Naive thymus-derived CD4-positive, alpha-beta T cell (primary cell): ENCODE measurements at regions of chr16 and their contacts with region 1.

Region 1: DNA sequence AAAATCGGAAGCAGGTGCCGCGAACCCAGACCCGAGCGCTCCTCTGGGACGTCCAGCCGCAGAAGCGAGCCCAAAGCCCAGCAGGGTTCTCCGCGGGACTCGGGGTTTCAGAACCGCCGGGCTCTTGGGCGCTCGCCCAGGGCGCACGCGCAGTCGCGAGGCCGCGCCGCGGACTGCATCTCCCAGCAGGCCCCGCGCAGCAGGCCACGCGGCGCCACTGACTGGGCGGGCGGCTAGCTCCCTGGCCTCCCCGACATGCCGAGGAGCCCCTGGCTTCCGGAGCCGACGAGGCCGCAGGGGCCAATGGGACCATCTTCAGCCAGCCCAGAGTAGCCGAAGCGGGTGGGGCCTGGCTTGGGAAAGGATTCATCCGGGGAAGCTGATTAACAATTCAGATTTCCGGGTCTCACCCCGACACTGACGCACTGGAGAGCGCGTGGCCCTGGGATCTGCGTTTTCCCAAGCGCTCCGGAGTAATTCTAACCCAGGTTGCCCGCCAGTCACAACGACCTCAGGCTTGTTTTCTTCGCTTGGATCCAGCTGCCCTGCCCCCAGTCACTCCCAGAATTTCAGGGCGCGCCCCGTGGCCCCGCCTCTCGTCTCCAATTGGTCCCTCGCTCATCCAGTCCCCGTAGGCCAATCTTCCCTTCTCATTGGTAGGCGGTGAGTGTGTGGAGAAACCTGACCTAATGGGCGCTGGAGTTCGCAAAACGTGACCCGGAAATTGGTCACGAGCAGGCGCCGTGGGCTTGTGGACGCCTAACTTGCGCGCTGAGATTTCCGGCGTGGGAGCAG is at the start of gene ZNF263:
- DNase-seq: peak; percentile 91 to 97 (median 95)
- ATAC-seq: peak; percentile 94
- H3K4me3 ChIP-seq: peak within 1 kb of the TSS; percentile 83
- H3K4me3 Mint-ChIP-seq: peak within 1 kb of the TSS; percentile 93 to 98 (median 96)
- H3K27ac ChIP-seq: peak within 1 kb of the TSS; percentile 92
- H3K27ac Mint-ChIP-seq: peak within 1 kb of the TSS; percentile 96 to 99 (median 98)
- H3K4me1 ChIP-seq: peaks cover 18 to 26% of the 10 kb centered on the region in 2 donors
- H3K4me1 Mint-ChIP-seq: peaks cover 21 to 48% (median 40%) of the 10 kb centered on the region in 7 donors
- H3K27me3 ChIP-seq: no peaks in the 10 kb centered on the region
- H3K27me3 Mint-ChIP-seq: peaks cover 0 to 3% (median 0%) of the 10 kb centered on the region in 5 donors
- total RNA-seq, gene ZNF263: 26.1 to 51.6 (median 36.9) TPM

Region 2: DNA sequence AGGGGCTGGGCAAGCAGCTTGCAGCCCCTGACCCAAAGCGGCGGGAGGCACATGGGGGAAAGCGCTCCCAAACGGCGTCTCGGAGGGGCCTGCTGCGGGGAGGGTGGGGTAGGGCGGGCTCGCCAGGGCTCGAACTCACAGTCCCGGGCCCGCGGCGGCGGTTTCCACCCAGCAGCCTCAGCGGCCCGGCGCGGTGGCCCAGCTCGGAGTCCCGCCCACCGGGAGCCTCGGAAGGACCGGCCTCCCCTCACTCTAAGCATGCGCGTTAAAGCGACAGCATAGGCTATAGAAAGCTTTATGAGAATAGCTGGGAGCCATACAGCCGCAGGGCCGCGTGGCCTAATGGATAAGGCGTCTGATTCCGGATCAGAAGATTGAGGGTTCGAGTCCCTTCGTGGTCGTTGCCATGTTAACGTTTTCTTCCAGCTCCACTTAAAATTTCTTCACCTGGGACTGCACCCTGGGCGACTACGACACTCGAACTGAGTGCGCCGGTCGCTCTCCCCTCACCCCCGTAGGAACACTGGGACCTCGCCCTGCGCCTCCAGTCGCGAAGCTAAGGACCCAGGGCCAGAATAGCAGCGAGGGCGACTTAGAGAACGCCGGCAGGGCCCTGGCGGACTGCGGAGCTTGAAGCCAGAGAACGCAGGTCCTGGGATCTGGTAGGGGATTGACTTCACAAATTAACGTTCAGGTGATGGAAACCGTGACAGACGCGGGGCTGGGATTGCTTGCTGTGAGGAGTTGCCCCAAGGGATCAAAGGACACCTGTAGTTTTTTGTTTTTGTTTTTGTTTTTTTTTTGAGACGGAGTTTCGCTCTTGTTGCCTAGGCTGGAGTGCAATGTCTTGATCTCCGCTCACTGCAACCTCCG is 132.3 kb before region 1 on chr16:
- CTCF ChIA-PET with region 1: no interaction called
- POLR2A ChIA-PET with region 1: interaction called, 3 read pairs
- intact Hi-C with region 1: loop called in 1 of 2 experiments (anchors 2 kb)
- DNase-seq: peak; percentile 90 to 100 (median 97)
- ATAC-seq: peak; percentile 90
- H3K4me3 ChIP-seq: peak overlapping the region; percentile 73
- H3K4me3 Mint-ChIP-seq: peak overlapping the region; percentile 83 to 93 (median 90)
- H3K27ac ChIP-seq: peak overlapping the region; percentile 71
- H3K27ac Mint-ChIP-seq: peak overlapping the region; percentile 85 to 98 (median 94)
- H3K4me1 ChIP-seq: peaks cover 0 to 5% of the 10 kb centered on the region in 2 donors
- H3K4me1 Mint-ChIP-seq: peaks cover 11 to 42% (median 22%) of the 10 kb centered on the region in 7 donors
- H3K27me3 ChIP-seq: no peaks in the 10 kb centered on the region
- H3K27me3 Mint-ChIP-seq: peaks cover 0 to 25% (median 0%) of the 10 kb centered on the region in 5 donors

Region 3: DNA sequence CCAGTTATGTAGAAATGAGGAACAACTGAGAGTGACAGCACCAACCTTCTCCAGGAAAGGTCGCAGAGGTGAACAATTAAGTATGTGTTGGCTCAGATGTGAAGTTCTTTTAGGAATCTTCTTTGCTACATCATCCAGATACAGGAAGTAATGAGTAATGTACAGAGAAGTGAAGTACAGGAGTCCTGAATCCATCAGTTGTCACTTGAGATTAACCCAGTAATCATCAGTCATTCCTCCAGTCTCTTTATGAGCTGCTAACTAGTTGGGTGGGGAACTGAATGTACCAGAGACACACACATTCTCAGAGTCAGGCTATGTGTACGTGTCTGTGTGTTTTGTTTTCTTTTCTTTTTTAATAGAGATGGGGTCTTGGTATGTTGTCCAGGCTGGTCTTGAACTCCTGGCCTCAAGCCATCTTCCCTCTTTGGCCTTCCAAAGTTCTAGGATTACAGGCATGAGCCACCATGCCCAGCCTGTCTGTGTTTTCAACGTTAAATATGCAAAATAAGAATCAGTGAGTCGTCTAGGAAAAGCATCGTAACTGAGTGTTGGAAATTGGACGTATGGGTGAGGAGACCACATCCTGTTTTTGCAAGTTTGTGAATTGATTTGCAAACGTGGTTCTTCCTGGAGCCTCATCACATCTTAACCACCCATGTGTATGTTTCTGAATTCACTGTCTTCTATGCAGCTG is 67.9 kb before region 1 on chr16:
- CTCF ChIA-PET with region 1: no interaction called
- POLR2A ChIA-PET with region 1: interaction called, 7 read pairs
- intact Hi-C with region 1: loop called in 1 of 2 experiments (anchors 5 kb)
- DNase-seq: peak in 7 of 9 donors; percentile 75 to 91 (median 87)
- ATAC-seq: peak; percentile 95
- H3K4me3 ChIP-seq: peak overlapping the region; percentile 38
- H3K4me3 Mint-ChIP-seq: peak overlapping the region; percentile 69 to 88 (median 76)
- H3K27ac ChIP-seq: peak overlapping the region; percentile 75
- H3K27ac Mint-ChIP-seq: peak overlapping the region; percentile 96 to 100 (median 99)
- H3K4me1 ChIP-seq: peaks cover 24 to 30% of the 10 kb centered on the region in 2 donors
- H3K4me1 Mint-ChIP-seq: peaks cover 30 to 51% (median 39%) of the 10 kb centered on the region in 7 donors
- H3K27me3 ChIP-seq: no peaks in the 10 kb centered on the region
- H3K27me3 Mint-ChIP-seq: no peaks in the 10 kb centered on the region

Region 4: DNA sequence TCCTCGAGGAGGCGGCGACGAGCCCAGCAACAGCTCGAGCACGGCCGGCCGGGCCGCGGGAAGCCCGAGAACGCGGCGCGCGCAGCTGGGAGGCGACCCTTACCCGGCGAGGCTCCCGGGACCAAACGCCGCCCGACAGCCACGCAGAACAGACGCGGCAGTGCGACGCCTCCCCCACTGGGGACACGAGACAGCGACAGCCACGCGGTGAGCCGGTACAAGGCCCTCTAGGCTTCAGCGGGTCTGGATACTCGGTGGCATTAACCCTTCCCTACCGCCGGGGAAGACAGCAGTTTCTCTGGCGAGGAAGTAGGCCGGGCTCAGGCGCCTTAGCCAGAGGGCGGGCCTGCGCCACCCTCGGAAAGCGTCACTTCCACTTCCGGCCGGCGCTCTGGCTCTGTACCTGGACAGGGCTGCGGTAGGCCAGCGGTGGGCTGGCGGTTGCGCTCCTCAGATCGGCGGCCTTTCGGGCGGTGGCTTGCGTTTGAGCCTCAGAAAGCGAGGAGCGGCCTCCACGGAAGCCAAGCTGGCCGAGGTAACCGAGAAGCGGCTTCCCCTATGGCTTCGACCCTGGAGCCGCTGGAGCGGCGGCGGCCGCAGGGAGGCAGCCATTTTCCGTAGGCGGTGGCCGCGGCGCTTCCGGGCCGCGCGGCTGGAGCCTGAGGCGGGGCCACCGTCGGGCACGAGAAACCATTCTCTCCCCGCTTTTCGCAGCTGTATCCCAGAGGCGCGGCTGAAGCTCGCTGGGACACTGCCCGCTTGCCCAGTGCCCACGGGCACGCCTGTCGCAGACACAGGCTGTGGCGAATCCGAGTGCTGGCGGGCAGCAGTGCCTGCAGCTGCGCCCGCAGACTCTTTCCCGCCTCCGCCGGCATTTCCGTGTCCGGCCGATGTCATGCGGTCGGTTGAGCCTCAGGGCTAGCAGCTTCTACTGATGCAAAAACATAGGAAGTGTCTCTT is 22.5 kb after region 1 on chr16 and contains the starts of genes TIGD7 and ZNF75A:
- CTCF ChIA-PET with region 1: interaction called, 4 read pairs
- POLR2A ChIA-PET with region 1: interaction called, 38 read pairs
- intact Hi-C with region 1: loop called (anchors 1 kb)
- DNase-seq: peak; percentile 69 to 89 (median 85)
- ATAC-seq: peak; percentile 96
- H3K4me3 ChIP-seq: peak within 1 kb of the TSS; percentile 78
- H3K4me3 Mint-ChIP-seq: peak within 1 kb of the TSS; percentile 78 to 87 (median 84)
- H3K27ac ChIP-seq: peak within 1 kb of the TSS; percentile 87
- H3K27ac Mint-ChIP-seq: peak within 1 kb of the TSS; percentile 62 to 92 (median 83)
- H3K4me1 ChIP-seq: peaks cover 12 to 13% of the 10 kb centered on the region in 2 donors
- H3K4me1 Mint-ChIP-seq: peaks cover 4 to 38% (median 19%) of the 10 kb centered on the region in 7 donors
- H3K27me3 ChIP-seq: no peaks in the 10 kb centered on the region
- H3K27me3 Mint-ChIP-seq: no peaks in the 10 kb centered on the region
- total RNA-seq, gene TIGD7: 4.9 to 18.4 (median 5.5) TPM
- total RNA-seq, gene ZNF75A: 27.7 to 90.6 (median 53.4) TPM

Region 5: GRCh38 chr16:3400779-3401688 is 118.1 kb after region 1 on chr16 and contains the starts of genes ZNF174 and ZSCAN32:
- CTCF ChIA-PET with region 1: no interaction called
- POLR2A ChIA-PET with region 1: interaction called, 40 read pairs
- intact Hi-C with region 1: loop called (anchors 1 kb)
- DNase-seq: peak; percentile 90 to 99 (median 98)
- ATAC-seq: peak; percentile 99
- H3K4me3 ChIP-seq: peak within 1 kb of the TSS; percentile 87
- H3K4me3 Mint-ChIP-seq: peak within 1 kb of the TSS; percentile 84 to 97 (median 94)
- H3K27ac ChIP-seq: peak within 1 kb of the TSS; percentile 89
- H3K27ac Mint-ChIP-seq: peak within 1 kb of the TSS; percentile 88 to 95 (median 91)
- H3K4me1 ChIP-seq: peaks cover 20 to 22% of the 10 kb centered on the region in 2 donors
- H3K4me1 Mint-ChIP-seq: peaks cover 14 to 77% (median 65%) of the 10 kb centered on the region in 7 donors
- H3K27me3 ChIP-seq: no peaks in the 10 kb centered on the region
- H3K27me3 Mint-ChIP-seq: no peaks in the 10 kb centered on the region
- total RNA-seq, gene ZNF174: 4.7 to 22.8 (median 13.5) TPM
- total RNA-seq, gene ZSCAN32: 9.7 to 31.1 (median 19.0) TPM

Region 6: GRCh38 chr16:3503523-3503922 is 220.6 kb after region 1 on chr16:
- CTCF ChIA-PET with region 1: no interaction called
- POLR2A ChIA-PET with region 1: interaction called, 5 read pairs
- intact Hi-C with region 1: loop called (anchors 1 kb)
- DNase-seq: peak in 8 of 9 donors; percentile 50 to 81 (median 70)
- ATAC-seq: peak; percentile 49
- H3K4me3 ChIP-seq: peak overlapping the region; percentile 3
- H3K4me3 Mint-ChIP-seq: peak overlapping the region; percentile 76 to 94 (median 84)
- H3K27ac ChIP-seq: peak overlapping the region; percentile 92
- H3K27ac Mint-ChIP-seq: peak overlapping the region; percentile 90 to 98 (median 95)
- H3K4me1 ChIP-seq: peaks cover 40 to 47% of the 10 kb centered on the region in 2 donors
- H3K4me1 Mint-ChIP-seq: peaks cover 37 to 80% (median 67%) of the 10 kb centered on the region in 7 donors
- H3K27me3 ChIP-seq: no peaks in the 10 kb centered on the region
- H3K27me3 Mint-ChIP-seq: no peaks in the 10 kb centered on the region